Gastrocnemius medialis (tissue), 4 donors: ENCODE measurements at regions of chr19 and their contacts with region 1.

Region 1: GRCh38 chr19:58543826-58544590 is at the start of gene TRIM28:
- DNase-seq: peak; percentile 95 to 97
- ATAC-seq: peak; percentile 97 to 98
- H3K4me3 ChIP-seq: peak within 1 kb of the TSS; percentile 75 to 94 (median 88)
- H3K27ac ChIP-seq: peak within 1 kb of the TSS; percentile 92 to 97 (median 96)
- H3K4me1 ChIP-seq: peaks cover 21 to 26% of the 10 kb centered on the region in 2 donors
- H3K27me3 ChIP-seq: no peaks in the 10 kb centered on the region
- CTCF ChIP-seq: peak in 1 of 5 experiments; percentile 1
- POLR2A ChIP-seq: peak; percentile 97 to 98
- total RNA-seq, gene TRIM28: 145 to 239 (median 191) TPM

Region 2: DNA sequence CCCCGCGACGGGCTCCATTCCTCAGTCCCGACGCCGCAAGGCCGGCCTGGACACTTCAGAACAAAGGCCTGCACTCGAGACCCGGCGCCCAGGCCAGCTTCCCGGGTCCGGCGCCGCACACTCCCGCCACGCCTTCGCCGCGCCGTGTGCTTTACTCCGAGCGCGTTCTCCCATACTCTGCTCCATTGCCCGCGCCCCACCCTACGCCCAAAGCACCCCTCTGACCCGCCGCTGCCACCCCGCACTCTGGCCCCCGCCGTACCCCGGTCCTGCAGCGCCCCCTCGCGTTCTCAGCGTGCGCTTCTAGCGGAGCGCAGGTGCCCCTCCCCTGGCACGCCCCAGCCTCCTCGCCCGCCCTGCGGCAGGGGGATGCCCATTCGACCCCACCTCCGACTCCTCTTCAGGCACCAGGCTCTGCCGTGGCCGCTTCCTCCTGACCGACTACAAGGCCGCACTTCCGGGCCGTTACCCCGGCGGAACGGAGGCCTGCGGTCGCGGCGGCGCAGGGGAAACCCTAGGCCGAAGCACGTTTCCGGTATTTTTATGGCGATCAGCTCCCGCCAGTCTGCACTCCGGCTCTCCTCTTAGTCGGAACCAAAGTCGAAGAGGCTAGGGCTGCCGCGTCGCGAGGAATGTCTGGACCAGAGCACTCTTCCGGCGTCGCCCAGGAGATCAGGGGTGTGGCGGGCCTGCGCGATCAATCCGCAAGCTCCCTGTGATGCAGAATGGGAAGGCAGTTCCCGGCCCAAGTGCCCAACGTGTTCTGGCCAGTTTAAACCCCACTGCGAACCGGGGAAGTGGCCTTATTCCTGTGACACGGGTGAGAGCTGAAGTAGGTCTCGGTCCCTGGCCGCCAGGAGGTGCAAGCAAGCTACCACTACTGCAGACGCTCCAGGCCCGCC is 24.4 kb before region 1 on chr19 and contains the start of gene ZBTB45:
- in situ Hi-C with region 1: no loop called
- intact Hi-C with region 1: loop called (anchors 1 kb)
- DNase-seq: peak; percentile 86 to 90
- ATAC-seq: peak; percentile 93
- H3K4me3 ChIP-seq: peak within 1 kb of the TSS; percentile 69 to 88 (median 80)
- H3K27ac ChIP-seq: peak within 1 kb of the TSS; percentile 84 to 96 (median 94)
- H3K4me1 ChIP-seq: peaks cover 31 to 36% of the 10 kb centered on the region in 2 donors
- H3K27me3 ChIP-seq: no peaks in the 10 kb centered on the region
- CTCF ChIP-seq: peak; percentile 74 to 92 (median 87)
- POLR2A ChIP-seq: peak; percentile 11 to 34
- total RNA-seq, gene ZBTB45: 5.9 to 12.2 (median 9.6) TPM

Region 3: DNA sequence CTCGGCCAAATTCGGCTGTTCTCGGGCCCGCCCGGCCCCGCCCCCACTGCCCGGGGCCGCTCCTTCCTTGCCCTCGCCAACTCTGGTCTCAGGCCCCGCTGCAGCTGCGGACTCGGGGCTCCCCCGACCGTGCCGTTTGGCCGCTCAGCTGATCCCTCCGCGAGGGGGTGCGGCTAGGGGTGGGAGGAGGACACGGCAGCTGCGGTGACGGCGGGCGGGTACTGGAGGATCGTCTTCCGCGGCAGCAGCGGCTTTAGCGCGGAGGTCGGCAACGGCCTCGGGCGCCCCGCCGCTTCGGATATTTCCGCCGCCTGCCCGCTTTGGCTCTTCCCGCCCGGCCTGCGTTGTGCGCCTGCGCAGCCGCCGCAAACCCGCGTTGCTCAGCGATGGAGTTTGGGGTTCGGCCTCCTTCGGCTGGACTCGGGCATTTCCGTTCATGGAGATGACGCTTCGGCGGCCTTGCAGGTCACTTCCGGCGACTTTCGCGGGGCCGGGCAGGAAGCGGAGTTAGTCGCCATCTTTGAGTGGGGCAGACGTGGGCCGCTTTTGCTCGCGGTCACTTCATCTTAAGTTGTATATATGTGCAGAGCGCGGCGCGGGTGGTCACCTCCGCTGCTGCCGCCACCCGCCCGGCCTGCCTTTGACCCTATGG is 14.7 kb after region 1 on chr19:
- in situ Hi-C with region 1: no loop called
- intact Hi-C with region 1: loop called (anchors 1 kb)
- DNase-seq: peak; percentile 99
- ATAC-seq: peak; percentile 81 to 84
- H3K4me3 ChIP-seq: peak overlapping the region; percentile 72 to 80 (median 78)
- H3K27ac ChIP-seq: peak overlapping the region; percentile 97 to 99 (median 97)
- H3K4me1 ChIP-seq: peaks cover 55 to 73% of the 10 kb centered on the region in 2 donors
- H3K27me3 ChIP-seq: no peaks in the 10 kb centered on the region
- CTCF ChIP-seq: no peak
- POLR2A ChIP-seq: peak; percentile 60 to 69

Region 4: DNA sequence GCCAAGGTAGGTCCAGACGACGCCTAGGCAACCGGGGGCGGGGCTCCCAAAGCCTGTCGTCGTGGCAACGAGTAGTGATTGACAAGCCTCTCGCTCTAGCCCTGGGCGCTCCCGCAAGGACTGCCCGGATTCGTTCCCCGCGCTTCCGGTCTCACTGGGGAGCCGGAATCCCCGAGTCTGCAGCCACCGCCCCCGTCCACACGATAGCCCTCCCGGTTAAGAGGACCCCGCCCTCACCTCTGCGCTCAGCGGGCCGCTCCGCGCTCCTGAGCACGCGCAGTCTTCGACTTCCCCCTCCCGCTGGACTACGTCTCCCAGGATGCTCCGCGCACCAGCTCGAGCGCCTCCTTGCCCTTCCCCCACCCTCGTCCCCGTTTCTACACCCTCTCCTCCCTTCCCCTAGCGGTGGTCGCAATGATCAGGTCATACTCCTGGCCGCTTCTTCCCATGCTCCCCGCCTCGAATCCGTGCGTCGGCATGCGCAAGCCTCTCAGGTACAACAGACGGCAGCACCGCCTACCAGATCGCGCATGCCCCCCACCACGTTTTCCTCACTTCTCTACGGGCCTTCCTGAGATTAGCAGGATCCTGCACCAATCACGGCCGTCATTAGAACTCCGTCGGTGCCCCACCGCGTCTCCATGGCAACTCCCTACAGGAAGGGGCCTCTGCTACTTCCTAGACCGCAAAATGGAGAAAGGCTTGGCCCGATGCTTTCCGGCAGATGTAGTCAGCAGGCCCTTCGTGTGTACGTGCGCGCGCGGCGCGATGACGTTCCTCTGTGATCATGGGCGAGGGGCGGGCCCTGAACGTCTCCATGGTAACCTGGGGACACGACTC is 29.0 kb after region 1 on chr19 and contains the start of gene MZF1:
- in situ Hi-C with region 1: no loop called
- intact Hi-C with region 1: loop called (anchors 1 kb)
- DNase-seq: peak; percentile 100
- ATAC-seq: peak; percentile 82 to 84
- H3K4me3 ChIP-seq: peak within 1 kb of the TSS; percentile 70 to 85 (median 76)
- H3K27ac ChIP-seq: peak within 1 kb of the TSS; percentile 95 to 99 (median 98)
- H3K4me1 ChIP-seq: peaks cover 18 to 24% of the 10 kb centered on the region in 2 donors
- H3K27me3 ChIP-seq: no peaks in the 10 kb centered on the region
- CTCF ChIP-seq: peak in 4 of 5 experiments; percentile 8 to 41 (median 26)
- POLR2A ChIP-seq: peak; percentile 37 to 40
- total RNA-seq, gene MZF1: 6.8 to 21.5 (median 15.1) TPM